ENCODE measurements at regions of chr3 and their contacts with region 1.

Region 1: DNA sequence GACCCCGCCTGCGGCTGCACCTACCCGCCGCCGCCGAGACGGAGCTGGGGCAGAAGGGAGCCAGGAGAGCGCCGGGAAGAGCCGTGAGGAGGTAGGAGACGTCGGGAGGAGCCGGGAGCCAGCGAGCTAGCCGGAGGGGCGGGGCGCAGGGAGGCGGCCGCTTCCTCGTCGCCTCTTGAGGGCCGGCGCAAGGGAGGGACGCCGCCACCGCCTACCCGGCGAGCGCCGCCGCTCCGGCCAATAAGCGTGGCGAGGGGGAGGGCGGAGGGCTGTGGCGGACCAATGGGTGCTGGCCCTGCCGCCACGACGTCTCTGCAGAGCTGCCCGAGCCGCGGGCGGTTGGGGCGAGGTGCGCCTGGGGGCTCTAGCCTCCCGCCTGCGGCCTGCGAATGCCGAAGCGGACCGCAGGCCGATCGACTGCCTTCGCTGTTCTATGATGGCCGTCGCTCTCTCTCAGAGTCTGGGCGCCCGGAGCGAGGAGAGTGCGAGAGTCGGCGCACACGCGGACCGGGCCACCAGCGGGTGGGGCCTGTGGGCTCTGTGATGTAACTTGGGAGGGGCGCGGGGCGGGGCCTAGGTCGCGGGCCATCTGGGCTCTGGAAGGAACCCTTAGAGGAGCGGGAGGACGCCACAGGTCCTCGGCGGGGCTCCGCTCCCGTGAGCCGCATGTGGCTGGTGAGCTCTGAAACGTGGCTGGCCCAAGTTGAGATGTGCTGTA is 72.7 kb upstream of the MAP4 start:
- DNase-seq: peak; percentile 96
- ATAC-seq: peak; percentile 67 to 68
- H3K4me3 ChIP-seq: peak overlapping the region; percentile 85 to 94 (median 87)
- H3K27ac ChIP-seq: peak overlapping the region; percentile 99
- H3K4me1 ChIP-seq: peaks cover 33 to 44% of the 10 kb centered on the region in 2 donors
- H3K27me3 ChIP-seq: no peaks in the 10 kb centered on the region
- CTCF ChIP-seq: no peak
- POLR2A ChIP-seq: peak; percentile 96

Region 2: GRCh38 chr3:47824541-47825473 is 264.1 kb before region 1 on chr3:
- in situ Hi-C with region 1: no loop called
- intact Hi-C with region 1: loop called (anchors 10 kb)
- DNase-seq: peak in 1 of 2 donors; percentile 70
- ATAC-seq: peak; percentile 95
- H3K4me3 ChIP-seq: peak overlapping the region; percentile 74 to 95 (median 88)
- H3K27ac ChIP-seq: peak overlapping the region; percentile 86 to 92 (median 89)
- H3K4me1 ChIP-seq: peaks cover 13 to 18% of the 10 kb centered on the region in 2 donors
- H3K27me3 ChIP-seq: no peaks in the 10 kb centered on the region
- CTCF ChIP-seq: peak; percentile 68 to 92 (median 86)
- POLR2A ChIP-seq: peak in 1 of 2 donors; percentile 27

Region 3: DNA sequence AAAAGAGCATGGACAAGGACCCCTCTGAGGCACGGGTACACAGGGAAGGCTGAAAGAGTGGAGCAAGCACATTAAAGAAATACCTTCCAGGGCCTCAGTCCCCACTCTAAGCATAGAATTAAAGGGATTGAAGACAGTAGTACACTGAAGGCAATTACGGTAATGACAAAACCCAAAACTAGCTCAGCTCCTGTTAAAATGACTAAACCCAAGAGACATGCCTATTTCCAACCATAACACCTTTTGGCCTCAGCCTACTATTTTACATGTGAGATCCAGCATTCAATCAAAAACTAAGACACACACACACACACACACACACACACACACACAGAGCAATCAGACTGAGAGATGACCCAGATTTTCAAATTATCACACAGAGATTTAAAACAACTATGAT is 92.5 kb before region 1 on chr3:
- in situ Hi-C with region 1: no loop called
- intact Hi-C with region 1: no loop called
- DNase-seq: no peak
- ATAC-seq: no peak
- H3K4me3 ChIP-seq: no peak overlapping the region
- H3K27ac ChIP-seq: peak overlapping the region; percentile 33 to 62 (median 56)
- H3K4me1 ChIP-seq: peaks cover 55 to 56% of the 10 kb centered on the region in 2 donors
- H3K27me3 ChIP-seq: no peaks in the 10 kb centered on the region
- CTCF ChIP-seq: no peak
- POLR2A ChIP-seq: no peak

Region 4: DNA sequence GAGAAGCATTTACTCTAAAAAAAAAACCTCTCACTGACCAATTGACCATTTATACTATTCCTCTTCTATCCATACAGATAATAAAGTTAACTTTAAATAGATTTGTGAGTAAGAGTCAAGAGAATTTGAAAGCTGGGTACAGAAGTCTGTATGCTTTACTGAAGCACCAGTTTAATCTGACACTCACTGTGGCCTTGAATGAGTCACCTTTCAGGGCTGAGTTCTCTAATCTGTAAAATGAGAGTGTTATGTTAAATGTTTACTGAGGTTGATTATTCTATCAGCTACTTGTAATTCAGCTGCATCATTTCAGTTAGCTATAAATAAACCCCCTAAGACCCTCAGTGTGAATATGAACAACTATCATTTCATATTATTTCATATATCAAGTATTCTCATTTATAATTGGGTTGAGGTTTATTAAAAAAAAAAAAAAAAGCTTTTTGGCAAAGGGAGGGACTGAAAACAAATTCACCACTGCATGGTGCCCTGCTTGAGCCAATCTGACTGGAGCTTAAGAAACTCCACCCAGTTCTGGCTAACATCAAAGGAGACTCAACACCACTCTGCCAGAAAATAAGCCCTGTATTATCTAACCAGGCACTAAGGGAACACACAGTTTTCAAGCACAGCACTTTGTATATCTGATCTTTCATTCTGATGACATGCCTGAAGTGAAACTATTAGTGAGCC is 75.5 kb before region 1 on chr3:
- in situ Hi-C with region 1: no loop called
- intact Hi-C with region 1: loop called (anchors 1 kb)
- DNase-seq: peak; percentile 61 to 81
- ATAC-seq: peak; percentile 86
- H3K4me3 ChIP-seq: peak overlapping the region; percentile 43 to 66 (median 56)
- H3K27ac ChIP-seq: peak overlapping the region; percentile 90 to 96 (median 92)
- H3K4me1 ChIP-seq: peaks cover 70 to 84% of the 10 kb centered on the region in 2 donors
- H3K27me3 ChIP-seq: no peaks in the 10 kb centered on the region
- CTCF ChIP-seq: no peak
- POLR2A ChIP-seq: peak in 1 of 2 donors; percentile 88

Region 5: DNA sequence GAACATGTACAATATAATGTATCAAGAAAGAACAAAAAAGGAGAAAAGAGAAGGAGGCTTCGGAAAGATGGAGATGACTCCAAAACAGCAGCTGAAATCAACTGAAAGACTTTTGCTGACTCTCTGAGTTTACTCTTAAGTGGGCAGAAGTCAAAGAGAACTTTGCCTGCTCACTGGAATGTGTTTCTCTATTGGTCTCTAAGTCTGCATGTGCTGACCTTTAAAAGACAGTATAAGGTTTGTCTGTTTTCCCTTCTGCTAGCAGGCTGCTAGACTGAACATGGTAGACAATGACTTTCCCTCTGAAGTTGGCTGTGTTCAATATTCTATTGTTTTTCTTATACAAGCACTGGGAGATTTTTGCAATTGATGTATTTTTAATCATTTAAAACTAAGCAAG is 65.5 kb before region 1 on chr3:
- in situ Hi-C with region 1: loop called in 1 of 4 experiments (anchors 10 kb)
- intact Hi-C with region 1: no loop called
- DNase-seq: no peak
- ATAC-seq: peak in 1 of 2 donors; percentile 28
- H3K4me3 ChIP-seq: no peak overlapping the region
- H3K27ac ChIP-seq: peak overlapping the region; percentile 0 to 96 (median 92)
- H3K4me1 ChIP-seq: peaks cover 57 to 72% of the 10 kb centered on the region in 2 donors
- H3K27me3 ChIP-seq: no peaks in the 10 kb centered on the region
- CTCF ChIP-seq: no peak
- POLR2A ChIP-seq: no peak